Heart right ventricle (tissue), 16 donors: ENCODE measurements at regions of chr17 and their contacts with region 1.

Region 1: DNA sequence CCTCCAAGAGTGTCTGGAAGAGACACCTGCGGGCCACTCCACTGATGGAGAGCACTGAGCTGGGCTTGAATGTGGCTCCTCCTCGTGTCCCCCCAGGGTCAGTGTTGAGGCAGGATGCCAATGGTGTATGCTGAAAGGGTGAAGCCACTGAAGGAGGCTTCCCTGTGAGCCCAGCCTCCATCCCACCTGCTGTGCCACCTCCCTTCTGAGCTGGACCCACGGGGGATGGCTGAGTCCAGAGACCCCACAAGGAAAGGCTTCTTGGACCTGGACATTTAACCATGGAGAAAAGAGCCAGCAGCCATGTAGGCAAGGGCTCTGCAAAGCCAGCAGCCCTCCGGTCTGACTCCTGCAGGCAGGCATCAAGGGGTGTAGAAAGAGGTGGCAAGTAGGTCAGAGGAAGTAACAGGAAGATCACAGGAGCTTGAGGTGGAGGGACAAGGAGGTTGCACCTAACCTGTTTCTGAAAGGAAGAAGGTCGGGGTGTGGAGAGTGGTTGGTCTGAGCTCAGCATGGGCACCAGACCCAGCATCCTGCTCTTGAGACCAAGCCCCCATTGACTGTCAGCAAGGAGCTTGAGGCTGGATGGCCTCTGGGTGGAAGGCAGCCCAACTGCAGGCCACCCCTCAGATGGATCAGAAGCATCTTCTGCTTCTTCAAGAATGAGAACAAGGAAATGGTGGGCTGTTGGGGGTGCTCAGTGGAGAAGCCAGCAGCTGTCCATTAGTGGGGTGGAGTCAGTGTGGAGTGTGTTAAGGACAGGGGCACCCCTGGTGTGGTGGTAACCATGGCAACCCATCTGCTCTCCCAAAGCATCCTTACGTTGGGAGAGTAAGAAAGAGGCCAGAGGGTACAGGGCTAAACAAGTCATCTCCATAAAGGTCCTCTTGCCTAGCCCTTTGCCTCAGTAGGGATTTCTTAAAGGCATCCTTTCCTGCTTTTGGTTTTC is 80.7 kb downstream of the PLD6 start:
- DNase-seq: no peak
- ATAC-seq: peak in 1 of 8 donors; percentile 1
- H3K4me3 ChIP-seq: no peak overlapping the region
- H3K27ac ChIP-seq: peak overlapping the region in 8 of 10 donors; percentile 18 to 65 (median 45)
- H3K4me1 ChIP-seq: peaks cover 15 to 92% (median 55%) of the 10 kb centered on the region in 9 donors
- H3K27me3 ChIP-seq: no peaks in the 10 kb centered on the region
- CTCF ChIP-seq: no peak

Region 2: DNA sequence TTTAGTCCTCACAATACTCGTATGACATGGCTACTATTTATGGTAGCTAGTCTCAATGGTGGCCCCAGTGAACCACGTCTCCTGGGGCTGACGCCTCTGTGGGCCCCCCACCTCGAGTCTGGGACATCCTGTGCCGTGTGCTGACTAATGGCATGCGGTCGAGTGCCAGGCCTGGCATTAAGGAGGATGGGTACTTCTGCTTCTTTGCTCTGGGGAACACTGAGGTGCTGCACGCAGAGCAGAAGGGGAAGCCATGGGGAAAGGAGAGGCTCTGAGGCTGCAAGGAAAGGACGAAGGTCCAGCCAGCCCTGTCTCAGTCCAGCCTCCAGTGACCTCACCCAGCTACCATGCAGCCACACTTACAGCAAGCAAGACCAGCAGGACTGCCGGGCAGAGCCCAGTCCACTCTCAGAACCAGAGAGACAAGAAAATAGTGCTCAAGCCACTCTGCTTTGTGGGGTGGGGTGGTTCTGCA is 88.8 kb before region 1 on chr17:
- intact Hi-C with region 1: loop called in 1 of 10 experiments (anchors 5 kb)
- DNase-seq: no peak
- ATAC-seq: peak in 7 of 8 donors; percentile 18 to 89 (median 74)
- H3K4me3 ChIP-seq: no peak overlapping the region
- H3K27ac ChIP-seq: peak overlapping the region; percentile 2 to 76 (median 49)
- H3K4me1 ChIP-seq: peaks cover 7 to 46% (median 29%) of the 10 kb centered on the region in 9 donors
- H3K27me3 ChIP-seq: no peaks in the 10 kb centered on the region
- CTCF ChIP-seq: no peak

Region 3: DNA sequence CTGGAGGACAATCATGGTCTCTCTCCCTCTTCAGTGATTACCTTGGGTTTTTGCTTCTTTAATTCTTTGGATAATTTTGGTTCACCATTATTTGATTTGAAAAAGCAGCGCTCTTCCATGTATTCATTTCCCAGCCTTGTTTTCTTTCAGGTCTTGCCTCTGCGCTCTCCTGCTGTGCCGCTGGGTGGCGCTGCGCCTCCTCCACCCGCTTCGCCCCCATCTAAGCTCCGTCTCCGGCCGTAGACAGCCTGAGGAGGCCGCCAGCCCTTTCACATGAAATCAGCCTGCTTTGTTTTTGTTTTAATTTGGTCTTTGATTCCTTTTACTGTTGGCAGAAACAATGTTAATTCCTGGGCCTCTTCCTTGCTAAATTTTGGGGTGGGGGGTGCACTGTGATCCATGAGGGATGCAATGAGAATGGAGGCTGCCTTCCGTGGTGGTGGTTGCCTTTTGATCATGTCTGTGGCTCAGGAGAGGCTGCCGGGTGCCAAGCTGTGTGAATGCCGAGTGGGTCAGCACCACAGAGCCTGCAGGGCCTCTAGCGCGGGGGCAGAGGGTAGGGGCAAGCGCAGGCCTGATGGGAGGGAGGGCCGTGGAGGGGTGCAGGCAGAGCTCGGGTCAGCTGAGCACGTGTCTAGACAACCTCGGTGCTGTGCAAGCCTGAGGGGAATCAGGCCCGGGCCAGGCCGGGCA is 16.6 kb after region 1 on chr17:
- intact Hi-C with region 1: no loop called
- DNase-seq: no peak
- ATAC-seq: peak in 5 of 8 donors; percentile 38 to 55 (median 49)
- H3K4me3 ChIP-seq: no peak overlapping the region
- H3K27ac ChIP-seq: peak overlapping the region in 6 of 10 donors; percentile 0 to 60 (median 16)
- H3K4me1 ChIP-seq: peaks cover 5 to 58% (median 23%) of the 10 kb centered on the region in 9 donors
- H3K27me3 ChIP-seq: no peaks in the 10 kb centered on the region
- CTCF ChIP-seq: peak; percentile 59 to 85 (median 81)